ENCODE measurements at regions of chr22 and their contacts with region 1.

Region 1: GRCh38 chr22:46071451-46072109 is 78.7 kb upstream of the PPARA start:
- DNase-seq: peak; percentile 94
- ATAC-seq: peak; percentile 29 to 48

Region 2: DNA sequence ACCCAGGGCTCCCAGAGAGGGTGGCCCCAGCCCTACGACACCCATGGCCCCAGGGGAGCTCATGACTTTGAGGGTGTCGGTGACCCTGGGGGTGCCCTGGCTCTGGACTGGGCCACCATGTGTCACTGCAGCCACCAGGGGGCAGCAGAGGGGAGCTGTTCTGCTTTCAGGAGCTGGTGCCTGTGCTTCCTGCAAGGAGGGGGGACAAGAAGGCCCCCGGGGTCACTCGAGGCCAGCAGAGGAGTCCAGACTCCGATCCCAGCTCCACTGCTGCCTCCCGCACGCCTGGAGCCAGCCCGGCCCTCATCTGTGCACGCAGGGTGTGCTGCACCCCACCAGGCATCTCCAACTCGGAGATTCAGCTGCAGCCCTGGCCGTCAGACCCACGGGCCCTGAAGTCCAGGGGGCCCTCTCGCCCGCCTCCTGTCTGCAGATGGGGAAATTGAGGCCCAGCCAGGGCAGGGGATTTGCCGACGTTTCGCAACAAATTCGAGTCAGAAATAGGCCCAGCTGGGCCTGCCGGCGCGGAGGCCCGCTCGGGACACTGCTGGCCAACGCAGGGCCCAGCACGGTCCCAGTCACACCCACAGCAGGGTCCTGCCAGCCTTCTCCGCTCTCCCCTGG is 65.1 kb before region 1 on chr22:
- intact Hi-C with region 1: loop called in 1 of 2 experiments (anchors 5 kb)
- DNase-seq: peak; percentile 96
- ATAC-seq: peak; percentile 57 to 68

Region 3: GRCh38 chr22:46054091-46055073 is 17.2 kb before region 1 on chr22:
- intact Hi-C with region 1: loop called in 1 of 2 experiments (anchors 2 kb)
- DNase-seq: peak; percentile 73
- ATAC-seq: peak; percentile 71 to 72

Region 4: DNA sequence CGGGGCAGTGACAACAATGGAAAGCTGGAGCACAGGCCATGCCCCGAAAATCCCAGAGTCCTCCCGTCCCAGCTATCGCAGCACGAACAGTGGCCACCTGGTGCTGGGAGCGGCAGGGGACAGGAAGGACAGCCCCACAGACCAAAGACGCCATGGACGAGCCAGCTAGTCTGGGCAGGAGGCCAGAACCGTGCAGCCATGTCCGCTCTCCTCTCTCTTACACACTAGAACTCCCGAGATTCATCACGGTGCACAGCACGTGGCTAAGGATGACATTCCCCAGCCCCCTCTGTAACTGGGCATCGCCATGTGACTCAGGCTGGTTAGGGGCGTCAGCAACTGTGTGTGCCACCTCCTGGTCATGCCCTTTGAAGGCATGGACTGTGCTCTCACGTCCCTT is 173.9 kb after region 1 on chr22:
- intact Hi-C with region 1: no loop called
- DNase-seq: peak; percentile 74
- ATAC-seq: peak; percentile 33 to 36